ENCODE measurements at regions of chr3 and their contacts with region 1.

Region 1: GRCh38 chr3:157159762-157160657 is at the start of gene CCNL1:
- DNase-seq: peak; percentile 76 to 94
- H3K4me3 ChIP-seq: peak within 1 kb of the TSS; percentile 60 to 91 (median 88)
- H3K27ac ChIP-seq: peak within 1 kb of the TSS; percentile 98
- H3K4me1 ChIP-seq: peaks cover 0 to 4% (median 2%) of the 10 kb centered on the region in 4 experiments; a peak in 6 of 7 replicates
- H3K27me3 ChIP-seq: no peaks in the 10 kb centered on the region
- CTCF ChIP-seq: no peak
- EP300 ChIP-seq: peak in 1 of 2 experiments; percentile 89; a peak in 1 of 3 replicates
- POLR2A ChIP-seq: peak; percentile 98 to 99
- RAD21 ChIP-seq: peak in 1 of 2 experiments; percentile 17; a peak in 1 of 4 replicates
- total RNA-seq, gene CCNL1: 61.2 and 68.6 TPM in 2 replicates

Region 2: DNA sequence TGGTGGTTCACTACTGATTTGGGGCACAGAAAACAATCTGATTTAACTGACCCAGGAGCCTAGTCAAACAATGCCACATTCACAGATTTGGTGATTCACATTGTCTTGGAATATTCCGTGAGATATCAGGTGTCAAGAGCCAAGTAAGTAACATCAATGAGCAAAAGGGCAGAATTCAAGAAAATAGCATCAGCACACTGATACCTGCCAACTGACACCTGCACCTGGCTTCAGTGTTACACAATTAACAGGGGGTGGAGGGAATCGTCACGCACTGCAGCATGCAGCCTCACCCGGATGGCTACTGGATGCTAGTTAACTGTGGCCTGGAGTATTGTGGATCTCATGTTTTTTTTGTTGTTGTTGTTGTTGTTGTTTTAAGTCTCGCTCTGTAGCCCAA is 17.7 kb before region 1 on chr3:
- CTCF ChIA-PET with region 1: interaction called, 16 read pairs
- POLR2A ChIA-PET with region 1: interaction called, 50 read pairs
- DNase-seq: no peak
- H3K4me3 ChIP-seq: no peak overlapping the region
- H3K27ac ChIP-seq: no peak overlapping the region
- H3K4me1 ChIP-seq: no peaks in the 10 kb centered on the region
- H3K27me3 ChIP-seq: no peaks in the 10 kb centered on the region
- CTCF ChIP-seq: no peak
- EP300 ChIP-seq: no peak
- POLR2A ChIP-seq: no peak
- RAD21 ChIP-seq: no peak

Region 3: DNA sequence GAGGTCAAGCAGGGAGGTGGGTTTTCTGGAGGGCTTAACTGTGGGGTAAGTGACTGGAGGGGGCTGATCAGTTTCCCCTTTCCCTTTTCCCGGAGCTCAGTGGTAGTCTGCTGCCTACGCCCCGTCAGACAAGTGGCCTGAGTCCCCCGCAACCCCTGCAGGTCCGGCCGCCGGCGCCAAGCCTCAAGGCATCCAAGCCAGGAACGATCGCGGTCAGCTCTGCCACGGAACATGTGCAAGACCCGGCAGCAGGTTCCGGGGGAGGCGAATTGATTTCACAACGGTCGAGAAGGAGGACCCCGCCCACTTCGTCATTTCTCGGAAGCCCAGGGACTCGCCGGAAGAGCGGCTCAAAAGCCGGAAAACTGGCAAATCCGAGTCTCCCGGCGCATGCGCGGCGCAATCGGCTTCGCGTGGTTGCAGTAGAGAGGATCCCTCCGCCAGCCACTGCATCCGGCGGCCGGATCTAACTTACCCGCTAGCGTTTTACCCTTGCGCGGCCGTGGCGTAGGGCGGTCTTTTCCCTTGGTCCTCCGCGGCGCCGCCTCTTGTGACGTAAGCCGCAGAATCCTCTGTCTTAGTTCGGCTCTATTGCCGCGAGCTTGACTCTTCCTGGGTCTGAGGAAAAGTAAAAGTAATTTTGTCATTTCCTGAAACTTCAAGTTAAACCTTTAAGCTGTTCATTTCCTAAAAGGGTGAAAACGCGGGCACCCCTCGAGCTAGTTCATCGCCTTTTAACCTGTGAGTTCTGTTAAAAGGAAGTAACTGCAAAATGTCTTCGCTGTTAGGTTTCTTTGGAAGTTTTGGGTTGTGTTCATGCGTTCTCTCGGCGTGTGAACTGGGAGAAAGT is 14.9 kb after region 1 on chr3:
- CTCF ChIA-PET with region 1: interaction called, 80 read pairs
- POLR2A ChIA-PET with region 1: interaction called, 245 read pairs
- DNase-seq: peak; percentile 91 to 99
- H3K4me3 ChIP-seq: peak overlapping the region; percentile 64 to 86 (median 74)
- H3K27ac ChIP-seq: peak overlapping the region; percentile 68; the same call in 1 of the 2 replicates
- H3K4me1 ChIP-seq: peaks cover 0 to 3% (median 0%) of the 10 kb centered on the region in 4 experiments; a peak in 1 of 7 replicates
- H3K27me3 ChIP-seq: no peaks in the 10 kb centered on the region
- CTCF ChIP-seq: no peak
- EP300 ChIP-seq: peak; percentile 6 to 77
- POLR2A ChIP-seq: peak; percentile 24 to 95
- RAD21 ChIP-seq: 0 out of 4 replicates have a peak, but pooled peaks of 1 of the 2 experiments have one; percentile 0

Region 4: GRCh38 chr3:157239082-157239704 is 79.2 kb after region 1 on chr3:
- CTCF ChIA-PET with region 1: interaction called, 13 read pairs
- POLR2A ChIA-PET with region 1: interaction called, 11 read pairs
- DNase-seq: peak; percentile 34 to 86
- H3K4me3 ChIP-seq: no peak overlapping the region
- H3K27ac ChIP-seq: no peak overlapping the region
- H3K4me1 ChIP-seq: no peaks in the 10 kb centered on the region
- H3K27me3 ChIP-seq: no peaks in the 10 kb centered on the region
- CTCF ChIP-seq: peak; percentile 88 to 95 (median 94)
- EP300 ChIP-seq: no peak
- POLR2A ChIP-seq: no peak
- RAD21 ChIP-seq: peak; percentile 94

Region 5: GRCh38 chr3:157311633-157312375 is 151.8 kb after region 1 on chr3:
- CTCF ChIA-PET with region 1: no interaction called
- POLR2A ChIA-PET with region 1: no interaction called
- DNase-seq: no peak
- H3K4me3 ChIP-seq: no peak overlapping the region
- H3K27ac ChIP-seq: no peak overlapping the region
- H3K4me1 ChIP-seq: no peaks in the 10 kb centered on the region
- H3K27me3 ChIP-seq: no peaks in the 10 kb centered on the region
- CTCF ChIP-seq: no peak
- EP300 ChIP-seq: no peak
- POLR2A ChIP-seq: no peak
- RAD21 ChIP-seq: no peak